HepG2 (cell line): ENCODE measurements at regions of chr9 and their contacts with region 1.

Region 1: DNA sequence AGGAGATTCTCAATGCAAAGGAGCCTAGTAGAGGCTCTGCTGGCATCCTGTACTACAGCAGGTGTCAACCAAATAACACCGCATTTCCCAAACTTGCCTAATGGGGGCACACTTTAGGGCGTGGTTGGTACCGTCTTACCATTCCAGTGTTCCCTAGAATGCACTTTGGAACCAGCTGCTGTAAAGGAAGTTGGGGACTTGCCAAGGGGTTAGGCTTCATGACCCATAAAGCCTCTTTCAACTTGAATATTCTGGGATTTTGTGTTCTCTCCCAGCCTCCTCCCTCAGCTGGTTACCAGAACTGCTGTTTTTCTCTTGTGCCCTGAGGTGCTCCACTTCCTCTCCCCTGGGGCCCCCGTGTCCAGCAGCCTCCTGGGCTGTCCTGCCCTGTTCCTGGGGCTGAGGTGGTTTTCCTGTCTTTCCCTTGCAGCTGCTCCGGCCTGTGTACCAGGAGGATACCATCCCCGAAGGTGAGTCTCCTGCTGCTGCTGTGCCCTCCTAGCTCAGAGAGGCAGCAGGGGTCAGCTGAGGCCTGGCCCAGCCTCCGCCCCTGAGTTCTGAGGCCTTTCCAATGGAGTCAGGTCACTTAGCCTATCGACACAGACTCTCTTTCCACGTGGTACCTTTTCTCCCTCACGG is 44.7 kb downstream of the RGS3 start:
- DNase-seq: peak; percentile 72
- ATAC-seq: no peak
- H3K4me3 ChIP-seq: no peak overlapping the region
- H3K27ac ChIP-seq: peak overlapping the region; percentile 39
- H3K4me1 ChIP-seq: peaks cover 77% of the 10 kb centered on the region
- H3K27me3 ChIP-seq: no peaks in the 10 kb centered on the region
- CTCF ChIP-seq: peak; percentile 45
- EP300 ChIP-seq: no peak
- POLR2A ChIP-seq: no peak
- RAD21 ChIP-seq: no peak

Region 2: GRCh38 chr9:113446323-113446740 is 61.9 kb before region 1 on chr9:
- CTCF ChIA-PET with region 1: no interaction called
- POLR2A ChIA-PET with region 1: interaction called, 4 read pairs
- in situ Hi-C with region 1: no loop called
- intact Hi-C with region 1: loop called (anchors 5 kb)
- DNase-seq: peak; percentile 47
- ATAC-seq: peak; percentile 43
- H3K4me3 ChIP-seq: no peak overlapping the region
- H3K27ac ChIP-seq: no peak overlapping the region
- H3K4me1 ChIP-seq: peaks cover 22% of the 10 kb centered on the region
- H3K27me3 ChIP-seq: no peaks in the 10 kb centered on the region
- CTCF ChIP-seq: peak; percentile 66
- EP300 ChIP-seq: no peak
- POLR2A ChIP-seq: no peak
- RAD21 ChIP-seq: peak; percentile 73

Region 3: DNA sequence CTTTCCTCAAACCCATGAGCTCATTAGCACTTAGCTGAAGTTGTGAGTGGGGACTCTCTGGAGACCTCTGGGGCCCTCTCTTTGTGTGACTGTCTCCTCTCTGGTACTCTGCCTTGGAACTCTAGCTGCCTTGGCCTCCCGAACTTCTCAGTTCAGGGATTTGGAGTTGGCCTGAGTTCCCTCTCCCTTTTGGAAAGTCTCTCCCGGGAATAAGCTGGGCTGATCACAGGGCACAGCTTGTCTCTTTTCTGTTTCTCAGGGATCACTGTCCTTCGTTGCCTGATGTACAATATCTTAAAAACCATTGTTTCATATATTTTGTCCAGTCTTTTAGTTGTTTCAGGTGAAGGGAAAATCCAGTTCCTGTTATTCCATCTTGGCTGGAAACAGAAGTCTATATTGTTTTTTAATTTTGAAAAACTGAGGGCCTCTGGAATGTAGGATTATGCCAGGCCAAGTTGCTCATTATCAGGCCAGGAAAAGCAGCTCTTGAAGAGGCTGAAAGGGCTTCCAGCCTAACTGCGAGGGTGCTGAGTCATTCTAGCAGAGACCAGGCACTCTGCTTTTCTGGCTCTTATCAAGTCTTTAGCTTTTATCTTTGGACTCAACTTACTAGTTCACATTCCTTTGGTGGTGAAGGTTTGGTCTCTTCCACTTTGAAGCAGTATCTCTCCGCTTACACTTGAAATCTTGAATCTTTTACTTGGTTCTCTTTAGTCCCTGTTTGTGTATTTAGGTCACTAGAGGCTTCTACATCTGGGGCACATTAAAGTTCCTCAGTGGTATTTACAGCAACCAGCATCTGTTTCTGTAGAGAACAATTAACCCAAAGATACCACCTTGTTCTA is 53.1 kb before region 1 on chr9:
- CTCF ChIA-PET with region 1: no interaction called
- POLR2A ChIA-PET with region 1: interaction called, 11 read pairs
- in situ Hi-C with region 1: no loop called
- intact Hi-C with region 1: loop called (anchors 5 kb)
- DNase-seq: peak; percentile 83
- ATAC-seq: peak; percentile 95
- H3K4me3 ChIP-seq: peak overlapping the region in 1 of 3 experiments; percentile 37; a peak in 1 of 6 replicates
- H3K27ac ChIP-seq: peak overlapping the region; percentile 85
- H3K4me1 ChIP-seq: peaks cover 49% of the 10 kb centered on the region
- H3K27me3 ChIP-seq: no peaks in the 10 kb centered on the region
- CTCF ChIP-seq: no peak
- EP300 ChIP-seq: peak; percentile 29 to 67; a peak in 2 of 4 replicates
- POLR2A ChIP-seq: 0 out of 4 replicates have a peak, but pooled peaks of 1 of the 2 experiments have one; percentile 29
- RAD21 ChIP-seq: no peak

Region 4: DNA sequence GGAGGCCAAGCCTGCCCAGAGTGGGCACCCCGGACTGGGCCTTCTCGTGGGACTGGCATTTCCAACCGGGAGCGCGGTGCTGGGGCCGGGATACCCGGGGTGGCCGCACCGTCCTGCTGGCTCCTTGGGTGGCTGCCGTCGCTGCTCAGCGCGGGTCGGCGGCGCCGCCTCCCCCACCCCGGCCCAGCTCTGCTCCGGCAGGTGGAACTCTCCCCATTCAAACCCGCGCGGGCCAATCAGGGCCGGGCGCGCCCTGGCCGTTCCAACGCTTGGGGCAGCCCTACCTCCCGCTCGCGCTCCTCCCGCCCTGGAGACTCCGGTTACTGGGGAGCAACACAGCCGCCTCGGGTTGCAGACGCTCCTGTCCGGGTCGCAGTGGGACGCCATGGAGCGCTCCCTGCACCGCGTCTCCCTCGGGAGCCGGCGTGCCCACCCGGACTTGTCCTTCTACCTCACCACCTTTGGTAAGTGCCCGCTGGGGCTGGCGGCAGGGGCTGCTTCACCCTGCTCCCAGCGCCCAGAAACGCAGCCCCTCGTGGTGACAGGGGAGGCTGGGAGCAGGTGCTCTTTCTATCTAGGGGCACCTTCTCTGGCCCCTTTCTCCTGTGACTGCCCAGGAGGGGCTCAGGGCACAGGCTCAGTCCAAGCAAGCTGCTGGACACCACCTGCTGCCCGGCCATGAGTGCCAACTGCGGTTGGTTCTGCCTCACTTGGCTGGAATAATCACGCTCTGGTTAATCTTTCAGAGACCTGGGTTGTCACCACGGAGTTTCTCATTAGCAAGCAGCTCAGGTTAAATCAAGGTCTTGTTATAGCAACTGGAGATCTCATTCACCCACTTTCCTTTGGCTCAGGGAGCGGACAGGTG is 44.6 kb before region 1 on chr9 and contains the start of gene RGS3:
- CTCF ChIA-PET with region 1: no interaction called
- POLR2A ChIA-PET with region 1: interaction called, 7 read pairs
- in situ Hi-C with region 1: no loop called
- intact Hi-C with region 1: loop called (anchors 5 kb)
- DNase-seq: peak; percentile 66
- ATAC-seq: peak; percentile 97
- H3K4me3 ChIP-seq: peak within 1 kb of the TSS; percentile 82 to 92 (median 86)
- H3K27ac ChIP-seq: peak within 1 kb of the TSS; percentile 64
- H3K4me1 ChIP-seq: peaks cover 68% of the 10 kb centered on the region
- H3K27me3 ChIP-seq: no peaks in the 10 kb centered on the region
- CTCF ChIP-seq: peak; percentile 44
- EP300 ChIP-seq: no peak
- POLR2A ChIP-seq: peak; percentile 60 to 75; a peak in 3 of 4 replicates
- RAD21 ChIP-seq: peak; percentile 33; the same call in 1 of the 2 replicates
- total RNA-seq, gene RGS3: 26.7 and 28.8 TPM in 2 replicates

Region 5: GRCh38 chr9:113492343-113493212 is 15.7 kb before region 1 on chr9:
- CTCF ChIA-PET with region 1: no interaction called
- POLR2A ChIA-PET with region 1: interaction called, 15 read pairs
- in situ Hi-C with region 1: no loop called
- intact Hi-C with region 1: no loop called
- DNase-seq: no peak
- ATAC-seq: no peak
- H3K4me3 ChIP-seq: no peak overlapping the region
- H3K27ac ChIP-seq: no peak overlapping the region
- H3K4me1 ChIP-seq: no peaks in the 10 kb centered on the region
- H3K27me3 ChIP-seq: no peaks in the 10 kb centered on the region
- CTCF ChIP-seq: no peak
- EP300 ChIP-seq: no peak
- POLR2A ChIP-seq: no peak
- RAD21 ChIP-seq: no peak

Region 6: DNA sequence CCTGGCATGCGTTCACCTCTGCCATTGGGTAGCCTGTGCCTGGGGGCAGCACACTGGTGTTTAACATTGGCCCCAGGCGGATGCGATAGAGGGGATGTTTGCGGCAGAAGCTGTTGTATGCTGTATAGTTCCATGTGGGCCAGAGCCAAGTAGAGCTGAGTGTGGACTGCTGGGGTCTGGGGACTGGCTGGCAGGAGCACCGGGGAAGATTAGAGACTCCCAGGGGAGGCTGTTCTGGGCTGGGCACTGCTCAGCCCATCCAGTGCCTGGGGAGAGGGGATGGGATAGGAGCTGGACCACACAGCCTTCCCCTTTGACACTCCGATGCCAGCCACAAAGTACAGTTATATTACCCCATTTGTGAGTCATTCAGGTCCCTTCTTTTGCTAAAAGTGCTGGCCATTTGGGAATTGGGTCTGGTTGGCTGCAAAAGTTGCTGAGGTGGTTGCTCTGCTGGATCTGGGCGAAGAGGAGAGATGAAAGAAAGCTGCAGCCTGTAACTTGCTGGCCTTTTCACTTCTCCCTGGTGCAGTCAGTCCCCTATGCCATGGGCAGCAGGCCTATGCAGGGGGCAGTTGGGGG is 29.1 kb after region 1 on chr9:
- CTCF ChIA-PET with region 1: no interaction called
- POLR2A ChIA-PET with region 1: no interaction called
- in situ Hi-C with region 1: no loop called
- intact Hi-C with region 1: no loop called
- DNase-seq: no peak
- ATAC-seq: no peak
- H3K4me3 ChIP-seq: no peak overlapping the region
- H3K27ac ChIP-seq: no peak overlapping the region
- H3K4me1 ChIP-seq: no peaks in the 10 kb centered on the region
- H3K27me3 ChIP-seq: no peaks in the 10 kb centered on the region
- CTCF ChIP-seq: no peak
- EP300 ChIP-seq: no peak
- POLR2A ChIP-seq: no peak
- RAD21 ChIP-seq: no peak

Region 7: DNA sequence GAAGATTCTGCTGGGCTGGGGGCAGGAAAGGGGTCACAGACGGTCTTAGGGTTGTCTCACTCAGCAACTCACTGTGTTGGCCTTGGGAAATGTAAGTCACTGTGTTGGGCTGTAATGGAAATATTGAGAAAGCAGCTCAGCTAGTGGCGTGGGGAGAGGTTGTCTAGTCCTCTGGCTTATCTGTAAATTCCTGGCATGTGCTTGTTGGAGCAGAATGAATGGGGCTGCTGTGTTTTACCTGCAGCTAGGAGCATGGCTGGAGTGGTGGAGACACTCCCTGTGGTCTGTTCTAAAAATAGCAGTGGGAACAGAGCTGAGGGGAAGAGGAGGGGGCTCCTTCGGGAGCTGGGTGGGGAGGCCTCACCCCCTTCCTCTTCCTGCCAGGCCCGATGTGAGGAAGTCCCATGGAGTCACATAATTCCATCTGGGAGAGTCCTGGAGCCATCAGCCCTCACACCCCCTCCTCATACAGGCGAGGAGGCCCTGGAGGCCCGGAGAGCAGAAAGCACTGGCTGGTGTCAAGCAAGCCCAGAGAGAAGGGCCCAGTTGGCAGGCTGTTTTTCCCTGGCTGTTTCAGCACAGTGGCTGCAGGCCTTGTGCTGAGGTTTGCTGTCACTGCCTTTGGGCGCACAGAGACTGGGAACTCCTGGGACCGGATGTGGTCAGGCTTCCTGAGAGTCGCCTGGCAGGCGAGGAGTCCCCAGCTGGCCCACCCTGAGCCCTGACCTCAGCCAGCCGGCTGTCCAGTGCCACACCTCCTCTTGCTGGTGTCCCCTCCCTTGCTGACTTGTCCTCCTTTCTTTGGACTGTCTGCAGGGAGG is 40.2 kb after region 1 on chr9:
- CTCF ChIA-PET with region 1: no interaction called
- POLR2A ChIA-PET with region 1: interaction called, 3 read pairs
- in situ Hi-C with region 1: no loop called
- intact Hi-C with region 1: loop called (anchors 1 kb)
- DNase-seq: peak; percentile 93
- ATAC-seq: peak; percentile 94
- H3K4me3 ChIP-seq: peak overlapping the region in 1 of 3 experiments; percentile 34; a peak in 2 of 6 replicates
- H3K27ac ChIP-seq: peak overlapping the region; percentile 54
- H3K4me1 ChIP-seq: peaks cover 41% of the 10 kb centered on the region
- H3K27me3 ChIP-seq: no peaks in the 10 kb centered on the region
- CTCF ChIP-seq: no peak
- EP300 ChIP-seq: peak in 1 of 2 experiments; percentile 43; a peak in 1 of 4 replicates
- POLR2A ChIP-seq: 0 out of 4 replicates have a peak, but pooled peaks of 1 of the 2 experiments have one; percentile 26
- RAD21 ChIP-seq: no peak

Region 8: DNA sequence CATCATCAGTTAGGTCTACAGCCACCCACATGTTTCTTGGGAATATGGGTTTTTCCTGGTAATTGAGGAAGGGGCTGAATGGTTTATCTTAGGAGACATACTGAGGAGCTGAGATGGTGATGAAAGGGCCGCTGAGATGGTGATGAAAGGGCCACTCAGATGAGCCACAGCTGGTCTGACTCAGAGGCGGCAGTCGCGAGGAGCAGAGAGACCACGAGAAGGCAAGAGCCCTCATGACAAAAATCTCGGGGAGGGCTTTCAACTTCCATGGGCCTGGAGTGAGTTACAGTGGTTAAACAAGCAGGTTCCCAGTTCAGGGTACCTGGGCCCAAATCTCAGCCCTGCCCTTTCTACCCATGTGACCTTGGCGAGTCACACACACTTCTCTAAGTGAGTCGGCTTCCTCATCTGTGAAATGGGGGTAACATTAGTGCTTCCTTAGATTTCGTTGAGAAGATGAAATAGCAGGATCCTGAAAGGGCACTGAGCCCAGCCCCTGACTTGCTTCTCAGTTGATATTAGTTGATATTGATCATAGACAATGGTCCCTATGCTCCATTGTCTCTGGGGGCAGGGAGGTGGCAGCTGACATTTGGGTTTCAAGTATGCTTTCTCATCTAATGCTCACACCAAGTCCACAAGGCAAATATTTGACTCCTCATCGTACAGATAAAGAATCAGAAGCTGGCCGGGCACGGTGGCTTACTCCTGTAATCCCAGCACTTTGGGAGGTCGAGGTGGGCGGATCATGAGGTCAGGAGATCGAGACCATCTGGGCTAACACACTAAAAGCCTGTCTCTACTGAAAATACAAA is 124.8 kb after region 1 on chr9:
- CTCF ChIA-PET with region 1: no interaction called
- POLR2A ChIA-PET with region 1: no interaction called
- in situ Hi-C with region 1: no loop called
- intact Hi-C with region 1: no loop called
- DNase-seq: no peak
- ATAC-seq: no peak
- H3K4me3 ChIP-seq: no peak overlapping the region
- H3K27ac ChIP-seq: no peak overlapping the region
- H3K4me1 ChIP-seq: peaks cover 55% of the 10 kb centered on the region
- H3K27me3 ChIP-seq: peaks cover 0 to 17% of the 10 kb centered on the region in 2 experiments; a peak in 1 of 5 replicates
- CTCF ChIP-seq: no peak
- EP300 ChIP-seq: no peak
- POLR2A ChIP-seq: no peak
- RAD21 ChIP-seq: no peak

Region 9: GRCh38 chr9:113753398-113754119 is 245.3 kb after region 1 on chr9:
- CTCF ChIA-PET with region 1: no interaction called
- POLR2A ChIA-PET with region 1: no interaction called
- in situ Hi-C with region 1: no loop called
- intact Hi-C with region 1: no loop called
- DNase-seq: no peak
- ATAC-seq: no peak
- H3K4me3 ChIP-seq: no peak overlapping the region
- H3K27ac ChIP-seq: no peak overlapping the region
- H3K4me1 ChIP-seq: no peaks in the 10 kb centered on the region
- H3K27me3 ChIP-seq: peaks cover 0 to 11% of the 10 kb centered on the region in 2 experiments; a peak in 3 of 5 replicates
- CTCF ChIP-seq: no peak
- EP300 ChIP-seq: no peak
- POLR2A ChIP-seq: no peak
- RAD21 ChIP-seq: no peak